H1 (cell line): ENCODE measurements at regions of chrX and their contacts with region 1.

Region 1: DNA sequence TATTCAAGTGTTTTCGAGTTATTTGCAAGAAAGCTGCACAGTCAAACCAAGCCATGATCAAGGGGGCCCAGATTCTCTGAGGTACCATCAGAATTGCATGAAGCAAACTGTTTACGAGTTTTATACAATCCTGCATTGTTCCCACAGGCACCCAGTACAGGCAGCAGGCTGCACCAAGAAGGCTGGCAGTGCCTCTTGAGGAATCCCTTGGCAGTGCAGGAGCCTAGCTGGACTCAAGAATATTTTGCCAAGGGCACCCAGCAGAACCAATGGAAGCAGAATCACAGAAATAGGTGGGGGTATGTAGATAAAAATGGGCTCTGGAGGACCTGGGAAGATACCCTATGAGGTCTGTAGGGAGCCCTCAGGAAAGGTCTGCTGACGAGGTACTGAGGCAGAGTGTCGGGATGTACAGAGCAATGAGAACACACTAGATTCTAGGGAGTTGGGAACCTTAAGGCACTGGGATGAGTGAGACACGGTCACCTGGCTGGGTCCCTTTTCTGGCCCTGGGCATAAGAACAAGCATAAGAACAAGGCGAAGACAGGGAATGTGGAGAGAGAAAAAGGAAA is 2.5 kb upstream of the PLP1 start:
- DNase-seq: no peak
- H3K4me3 ChIP-seq: no peak overlapping the region
- H3K27ac ChIP-seq: no peak overlapping the region
- H3K4me1 ChIP-seq: no peaks in the 10 kb centered on the region; a peak in 2 of 7 replicates
- H3K27me3 ChIP-seq: no peaks in the 10 kb centered on the region
- CTCF ChIP-seq: peak; percentile 9 to 36 (median 29)
- EP300 ChIP-seq: no peak
- POLR2A ChIP-seq: no peak
- RAD21 ChIP-seq: peak; percentile 61 to 67

Region 2: DNA sequence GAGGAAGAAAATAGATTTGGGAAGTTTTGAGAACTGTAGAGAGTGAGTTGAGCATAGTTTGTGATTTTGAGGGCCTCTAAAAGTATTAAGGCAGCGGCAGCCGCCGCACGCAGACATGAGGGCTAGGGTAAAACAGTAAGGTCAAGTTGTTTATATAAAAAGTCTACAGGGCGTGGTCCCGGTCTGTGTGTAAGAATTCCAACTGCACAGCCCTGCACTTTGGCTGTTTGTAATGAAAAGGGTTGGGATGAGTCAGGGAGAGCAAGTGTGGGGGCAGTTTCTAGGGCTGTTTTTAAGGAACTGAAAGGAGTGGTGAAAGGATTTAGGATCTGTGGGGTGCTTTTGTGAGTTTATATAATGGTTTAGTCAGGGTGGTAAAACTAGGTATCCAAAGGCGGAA is 342.8 kb before region 1 on chrX:
- CTCF ChIA-PET with region 1: no interaction called
- POLR2A ChIA-PET with region 1: no interaction called
- DNase-seq: no peak
- H3K4me3 ChIP-seq: no peak overlapping the region
- H3K27ac ChIP-seq: no peak overlapping the region
- H3K4me1 ChIP-seq: peaks cover 0 to 4% (median 0%) of the 10 kb centered on the region in 4 experiments; a peak in 1 of 7 replicates
- H3K27me3 ChIP-seq: no peaks in the 10 kb centered on the region
- CTCF ChIP-seq: no peak
- EP300 ChIP-seq: no peak
- POLR2A ChIP-seq: no peak
- RAD21 ChIP-seq: no peak

Region 3: GRCh38 chrX:103711533-103712369 is 62.4 kb before region 1 on chrX:
- CTCF ChIA-PET with region 1: interaction called, 23 read pairs
- POLR2A ChIA-PET with region 1: interaction called, 5 read pairs
- DNase-seq: peak in 1 of 2 experiments; percentile 78
- H3K4me3 ChIP-seq: no peak overlapping the region
- H3K27ac ChIP-seq: peak overlapping the region; percentile 62; the same call in 1 of the 2 replicates
- H3K4me1 ChIP-seq: peaks cover 0 to 6% (median 3%) of the 10 kb centered on the region in 4 experiments; a peak in 5 of 7 replicates
- H3K27me3 ChIP-seq: no peaks in the 10 kb centered on the region
- CTCF ChIP-seq: peak in 2 of 3 experiments; percentile 51 to 70; a peak in 3 of 4 replicates
- EP300 ChIP-seq: no peak
- POLR2A ChIP-seq: no peak
- RAD21 ChIP-seq: peak; percentile 61 to 70

Region 4: GRCh38 chrX:103878466-103879122 is 104.4 kb after region 1 on chrX:
- CTCF ChIA-PET with region 1: no interaction called
- POLR2A ChIA-PET with region 1: no interaction called
- DNase-seq: no peak
- H3K4me3 ChIP-seq: no peak overlapping the region
- H3K27ac ChIP-seq: no peak overlapping the region
- H3K4me1 ChIP-seq: no peaks in the 10 kb centered on the region
- H3K27me3 ChIP-seq: no peaks in the 10 kb centered on the region
- CTCF ChIP-seq: no peak
- EP300 ChIP-seq: no peak
- POLR2A ChIP-seq: no peak
- RAD21 ChIP-seq: no peak